ENCODE measurements at regions of chr22 and their contacts with region 1.

Region 1: GRCh38 chr22:26985931-26986782 is 328.8 kb downstream of the MIAT start:
- DNase-seq: no peak

Region 2: GRCh38 chr22:26949193-26949592 is 37.0 kb before region 1 on chr22:
- intact Hi-C with region 1: loop called in 1 of 2 experiments (anchors 1 kb)
- DNase-seq: no peak